B cell (primary cell): ENCODE measurements at regions of chr18 and their contacts with region 1.

Region 1: GRCh38 chr18:35231052-35231451 is 9.8 kb upstream of the ZNF397 start:
- DNase-seq: peak; percentile 86
- ATAC-seq: peak; percentile 88
- H3K4me3 ChIP-seq: peak overlapping the region in 1 of 5 experiments; percentile 31
- H3K4me3 Mint-ChIP-seq: peak overlapping the region; percentile 59
- H3K27ac ChIP-seq: no peak overlapping the region
- H3K27ac Mint-ChIP-seq: peak overlapping the region; percentile 10
- H3K4me1 ChIP-seq: no peaks in the 10 kb centered on the region
- H3K4me1 Mint-ChIP-seq: peaks cover 3% of the 10 kb centered on the region
- H3K27me3 ChIP-seq: no peaks in the 10 kb centered on the region
- H3K27me3 Mint-ChIP-seq: no peaks in the 10 kb centered on the region
- CTCF ChIP-seq: peak; percentile 99

Region 2: GRCh38 chr18:35174093-35174731 is 56.8 kb before region 1 on chr18:
- CTCF ChIA-PET with region 1: interaction called, 3 read pairs
- POLR2A ChIA-PET with region 1: no interaction called
- intact Hi-C with region 1: loop called (anchors 10 kb)
- DNase-seq: peak; percentile 78
- ATAC-seq: peak; percentile 98
- H3K4me3 ChIP-seq: no peak overlapping the region
- H3K4me3 Mint-ChIP-seq: peak overlapping the region; percentile 59
- H3K27ac ChIP-seq: peak overlapping the region; percentile 37 to 69
- H3K27ac Mint-ChIP-seq: peak overlapping the region; percentile 77
- H3K4me1 ChIP-seq: peaks cover 14 to 23% of the 10 kb centered on the region in 2 donors
- H3K4me1 Mint-ChIP-seq: peaks cover 23% of the 10 kb centered on the region
- H3K27me3 ChIP-seq: no peaks in the 10 kb centered on the region
- H3K27me3 Mint-ChIP-seq: no peaks in the 10 kb centered on the region
- CTCF ChIP-seq: no peak

Region 3: DNA sequence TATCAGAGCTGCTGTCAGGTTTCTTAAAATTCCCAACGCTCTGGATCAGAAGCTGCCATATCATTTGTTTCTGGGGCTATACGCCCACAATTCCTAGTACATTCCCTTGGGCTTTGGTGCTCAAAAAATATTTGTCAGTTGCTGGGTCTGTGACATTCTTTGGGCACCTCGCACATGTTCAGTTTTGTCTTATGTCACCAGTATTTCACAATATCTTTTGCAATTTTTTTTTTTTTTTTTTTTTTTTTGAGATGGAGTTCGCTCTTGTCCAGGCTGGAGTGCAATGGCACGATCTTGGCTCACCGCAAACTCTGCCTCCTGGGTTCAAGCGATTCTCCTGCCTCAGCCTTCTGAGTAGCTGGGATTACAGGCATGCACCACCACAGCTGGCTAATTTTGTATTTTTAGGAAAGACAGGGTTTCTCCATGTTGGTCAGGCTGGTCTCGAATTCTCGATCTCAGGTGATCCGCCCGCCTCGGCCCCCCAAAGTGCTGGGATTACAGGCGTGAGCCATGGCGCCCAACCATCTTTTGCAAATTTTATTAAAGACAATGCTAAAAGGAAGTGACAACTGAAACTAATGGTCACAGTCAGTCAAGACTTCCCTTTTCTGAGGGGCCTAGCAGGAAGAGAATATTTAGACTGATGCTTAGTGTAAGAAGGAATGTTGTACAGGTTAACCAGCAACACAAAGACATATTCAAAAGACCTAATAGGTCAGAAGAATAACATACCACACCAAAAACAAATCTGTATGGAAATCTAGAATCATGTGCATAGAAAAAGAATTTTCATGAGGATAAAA is 16.6 kb after region 1 on chr18:
- CTCF ChIA-PET with region 1: interaction called, 10 read pairs
- POLR2A ChIA-PET with region 1: no interaction called
- intact Hi-C with region 1: no loop called
- DNase-seq: peak; percentile 78
- ATAC-seq: peak; percentile 93
- H3K4me3 ChIP-seq: peak overlapping the region in 1 of 5 experiments; percentile 18
- H3K4me3 Mint-ChIP-seq: peak overlapping the region; percentile 73
- H3K27ac ChIP-seq: peak overlapping the region; percentile 0 to 66
- H3K27ac Mint-ChIP-seq: peak overlapping the region; percentile 91
- H3K4me1 ChIP-seq: peaks cover 24 to 26% of the 10 kb centered on the region in 2 donors
- H3K4me1 Mint-ChIP-seq: peaks cover 39% of the 10 kb centered on the region
- H3K27me3 ChIP-seq: no peaks in the 10 kb centered on the region
- H3K27me3 Mint-ChIP-seq: no peaks in the 10 kb centered on the region
- CTCF ChIP-seq: no peak

Region 4: DNA sequence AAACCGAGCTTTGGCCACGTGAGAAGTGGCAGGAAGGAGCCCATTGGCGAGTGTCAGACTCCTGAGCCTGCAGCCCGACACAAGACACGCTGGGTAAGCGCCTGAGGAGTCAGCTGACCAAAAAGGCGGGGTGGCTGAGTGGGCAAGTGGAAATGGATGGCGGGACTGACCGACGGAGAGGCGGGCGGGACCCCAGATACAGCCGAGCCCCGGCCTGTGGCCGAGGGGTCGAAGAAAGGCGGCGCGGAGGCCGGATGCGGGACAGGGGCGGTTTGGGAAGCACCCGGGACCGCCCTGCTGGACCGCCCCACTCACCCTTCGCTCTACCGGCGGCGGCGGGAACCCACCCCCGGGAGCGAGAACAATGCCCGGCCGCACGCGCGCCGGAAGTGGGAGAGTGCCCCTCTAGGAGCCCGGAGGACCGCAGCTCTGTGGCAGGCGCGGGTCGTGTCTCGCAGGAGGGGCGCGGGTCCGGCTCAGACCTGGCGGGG is 36.2 kb after region 1 on chr18:
- CTCF ChIA-PET with region 1: interaction called, 3 read pairs
- POLR2A ChIA-PET with region 1: interaction called, 10 read pairs
- intact Hi-C with region 1: loop called (anchors 5 kb)
- DNase-seq: peak; percentile 84
- ATAC-seq: peak; percentile 85
- H3K4me3 ChIP-seq: peak overlapping the region; percentile 34 to 79 (median 76)
- H3K4me3 Mint-ChIP-seq: peak overlapping the region; percentile 95
- H3K27ac ChIP-seq: peak overlapping the region; percentile 81 to 93
- H3K27ac Mint-ChIP-seq: peak overlapping the region; percentile 95
- H3K4me1 ChIP-seq: peaks cover 18 to 23% of the 10 kb centered on the region in 2 donors
- H3K4me1 Mint-ChIP-seq: peaks cover 31% of the 10 kb centered on the region
- H3K27me3 ChIP-seq: no peaks in the 10 kb centered on the region
- H3K27me3 Mint-ChIP-seq: no peaks in the 10 kb centered on the region
- CTCF ChIP-seq: no peak

Region 5: GRCh38 chr18:35355140-35355618 is 124.1 kb after region 1 on chr18:
- CTCF ChIA-PET with region 1: interaction called, 110 read pairs
- POLR2A ChIA-PET with region 1: interaction called, 5 read pairs
- intact Hi-C with region 1: loop called (anchors 1 kb)
- DNase-seq: peak; percentile 85
- ATAC-seq: peak; percentile 99
- H3K4me3 ChIP-seq: no peak overlapping the region
- H3K4me3 Mint-ChIP-seq: no peak overlapping the region
- H3K27ac ChIP-seq: no peak overlapping the region
- H3K27ac Mint-ChIP-seq: no peak overlapping the region
- H3K4me1 ChIP-seq: no peaks in the 10 kb centered on the region
- H3K4me1 Mint-ChIP-seq: no peaks in the 10 kb centered on the region
- H3K27me3 ChIP-seq: no peaks in the 10 kb centered on the region
- H3K27me3 Mint-ChIP-seq: no peaks in the 10 kb centered on the region
- CTCF ChIP-seq: peak; percentile 76

Region 6: GRCh38 chr18:35386600-35387351 is 155.7 kb after region 1 on chr18:
- CTCF ChIA-PET with region 1: interaction called, 25 read pairs
- POLR2A ChIA-PET with region 1: no interaction called
- intact Hi-C with region 1: loop called (anchors 1 kb)
- DNase-seq: peak; percentile 83
- ATAC-seq: peak; percentile 95
- H3K4me3 ChIP-seq: no peak overlapping the region
- H3K4me3 Mint-ChIP-seq: no peak overlapping the region
- H3K27ac ChIP-seq: no peak overlapping the region
- H3K27ac Mint-ChIP-seq: no peak overlapping the region
- H3K4me1 ChIP-seq: peaks cover 5 to 6% of the 10 kb centered on the region in 2 donors
- H3K4me1 Mint-ChIP-seq: peaks cover 9% of the 10 kb centered on the region
- H3K27me3 ChIP-seq: peaks cover 0 to 7% (median 2%) of the 10 kb centered on the region in 4 experiments
- H3K27me3 Mint-ChIP-seq: peaks cover 31% of the 10 kb centered on the region
- CTCF ChIP-seq: peak; percentile 98

Region 7: GRCh38 chr18:36247036-36247435 is 1016.0 kb after region 1 on chr18:
- CTCF ChIA-PET with region 1: no interaction called
- POLR2A ChIA-PET with region 1: no interaction called
- intact Hi-C with region 1: no loop called
- DNase-seq: no peak
- ATAC-seq: no peak
- H3K4me3 ChIP-seq: no peak overlapping the region
- H3K4me3 Mint-ChIP-seq: no peak overlapping the region
- H3K27ac ChIP-seq: no peak overlapping the region
- H3K27ac Mint-ChIP-seq: no peak overlapping the region
- H3K4me1 ChIP-seq: peaks cover 0 to 3% of the 10 kb centered on the region in 2 donors
- H3K4me1 Mint-ChIP-seq: peaks cover 7% of the 10 kb centered on the region
- H3K27me3 ChIP-seq: peaks cover 0 to 17% (median 4%) of the 10 kb centered on the region in 4 experiments
- H3K27me3 Mint-ChIP-seq: peaks cover 63% of the 10 kb centered on the region
- CTCF ChIP-seq: no peak